ENCODE measurements at regions of chr1 and their contacts with region 1.

Region 1: GRCh38 chr1:204941421-204942338 is 71.0 kb downstream of the NFASC start:
- DNase-seq: peak; percentile 4
- H3K4me3 ChIP-seq: no peak overlapping the region
- H3K27me3 ChIP-seq: no peaks in the 10 kb centered on the region; the same call in 1 of the 2 replicates
- CTCF ChIP-seq: peak; percentile 97

Region 2: DNA sequence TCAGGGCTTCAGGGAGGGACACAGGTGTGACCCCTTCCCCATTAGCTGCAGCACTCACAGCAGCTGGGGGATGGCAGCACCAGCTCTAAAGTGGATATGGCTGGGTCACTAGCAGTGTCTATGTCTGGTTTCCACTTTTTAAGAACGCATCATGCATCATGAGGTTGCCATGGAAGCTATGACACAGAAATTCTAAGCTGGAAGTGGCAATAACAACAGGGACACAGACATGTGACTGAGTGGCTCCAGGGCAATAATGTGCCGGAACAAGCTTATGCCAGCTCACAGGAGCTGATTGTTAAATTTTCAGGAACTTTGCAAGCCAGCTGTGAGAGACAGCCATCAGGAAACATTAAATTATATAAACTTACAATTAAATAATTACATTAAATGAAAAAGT is 122.2 kb before region 1 on chr1:
- CTCF ChIA-PET with region 1: interaction called, 231 read pairs
- POLR2A ChIA-PET with region 1: no interaction called
- DNase-seq: no peak
- H3K4me3 ChIP-seq: no peak overlapping the region
- H3K27me3 ChIP-seq: peaks cover 9% of the 10 kb centered on the region
- CTCF ChIP-seq: no peak

Region 3: GRCh38 chr1:204885288-204885711 is 56.4 kb before region 1 on chr1:
- CTCF ChIA-PET with region 1: interaction called, 15 read pairs
- POLR2A ChIA-PET with region 1: no interaction called
- DNase-seq: no peak
- H3K4me3 ChIP-seq: peak overlapping the region; percentile 21; the same call in 1 of the 2 replicates
- H3K27me3 ChIP-seq: no peaks in the 10 kb centered on the region
- CTCF ChIP-seq: no peak

Region 4: GRCh38 chr1:204929487-204930154 is 12.1 kb before region 1 on chr1:
- CTCF ChIA-PET with region 1: interaction called, 24 read pairs
- POLR2A ChIA-PET with region 1: no interaction called
- DNase-seq: no peak
- H3K4me3 ChIP-seq: no peak overlapping the region
- H3K27me3 ChIP-seq: no peaks in the 10 kb centered on the region
- CTCF ChIP-seq: no peak

Region 5: DNA sequence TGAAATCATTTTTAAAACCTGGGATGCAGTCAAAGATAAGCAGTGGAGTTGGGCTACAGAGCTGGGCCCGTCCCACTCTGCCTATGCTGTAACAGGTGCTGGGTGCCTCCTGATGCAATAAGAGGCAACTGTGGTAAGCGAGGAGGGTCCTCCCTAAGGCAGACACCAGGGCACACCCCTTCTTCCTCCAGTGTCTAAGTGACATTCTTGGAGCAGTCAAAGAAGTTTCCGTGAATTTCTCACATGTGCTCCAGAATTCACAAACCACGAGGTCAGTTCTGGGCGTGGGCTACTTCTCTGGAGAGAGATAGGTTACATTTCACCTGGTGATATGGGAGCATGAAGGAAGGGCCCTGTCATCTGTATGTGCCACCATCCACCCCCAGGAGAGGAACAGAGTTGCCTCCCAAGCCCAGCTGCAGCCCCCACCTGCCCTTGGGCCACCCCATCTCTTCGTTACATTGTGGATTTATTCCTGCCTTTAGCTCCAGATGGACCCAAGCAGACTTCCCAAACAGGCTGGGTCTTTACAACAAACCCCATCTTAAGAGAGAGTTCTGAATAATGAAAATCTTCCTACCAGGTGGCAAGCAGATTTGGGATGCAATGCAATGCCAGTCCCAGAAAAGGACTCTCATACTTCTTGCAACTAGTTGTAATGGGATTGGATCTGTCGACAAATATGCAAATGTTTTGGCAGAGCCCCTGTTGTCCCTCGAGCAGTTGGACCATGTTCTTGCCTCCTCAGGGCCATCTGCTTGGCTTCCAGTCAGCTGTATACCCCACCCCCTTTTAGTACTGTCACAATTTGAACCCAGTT is 18.8 kb after region 1 on chr1:
- CTCF ChIA-PET with region 1: no interaction called
- POLR2A ChIA-PET with region 1: no interaction called
- DNase-seq: no peak
- H3K4me3 ChIP-seq: no peak overlapping the region
- H3K27me3 ChIP-seq: no peaks in the 10 kb centered on the region
- CTCF ChIP-seq: no peak